Common myeloid progenitor, CD34-positive (primary cell): ENCODE measurements at regions of chr15 and their contacts with region 1.

Region 1: GRCh38 chr15:65032801-65033537 is 3.5 kb upstream of the MTFMT start:
- DNase-seq: peak; percentile 66 to 75 (median 74)
- H3K4me3 ChIP-seq: peak overlapping the region in 1 of 7 experiments; percentile 50
- H3K27ac ChIP-seq: no peak overlapping the region
- H3K4me1 ChIP-seq: peaks cover 5 to 24% (median 17%) of the 10 kb centered on the region in 4 experiments
- H3K27me3 ChIP-seq: peaks cover 0 to 3% (median 0%) of the 10 kb centered on the region in 5 experiments

Region 2: DNA sequence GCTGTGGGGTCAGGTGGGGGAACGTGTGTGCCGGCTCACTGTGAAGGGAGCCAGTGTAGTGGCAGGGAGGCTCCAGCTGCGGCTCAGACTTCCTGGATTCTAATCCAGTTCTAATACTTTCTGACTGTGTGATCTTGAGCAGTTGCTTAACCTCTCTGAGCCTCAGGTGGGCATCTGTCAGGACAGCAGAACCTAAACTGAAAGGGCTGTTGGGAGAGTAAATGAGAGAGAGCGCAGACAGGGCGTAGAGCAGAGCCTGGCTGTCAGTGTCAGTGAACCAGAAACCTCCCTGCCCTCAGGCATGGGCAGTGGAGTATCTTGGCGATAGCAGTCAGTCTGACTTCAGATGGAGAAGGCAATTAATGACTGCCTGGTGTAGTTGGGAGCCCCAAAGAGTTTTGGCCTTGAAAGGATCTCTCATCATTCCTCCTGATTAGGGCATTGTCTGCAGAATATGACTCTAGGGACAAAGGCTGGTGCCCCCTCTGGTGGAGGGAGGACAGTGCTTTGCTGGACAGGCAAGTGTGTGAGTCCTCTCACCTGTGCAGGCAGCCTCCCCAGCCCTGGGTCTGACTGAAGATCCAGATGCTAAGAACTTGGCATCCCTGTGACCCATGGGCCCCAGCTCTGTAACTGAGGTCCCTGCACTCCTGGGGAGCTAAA is 53.2 kb after region 1 on chr15:
- CTCF ChIA-PET with region 1: interaction called, 26 read pairs
- POLR2A ChIA-PET with region 1: no interaction called
- DNase-seq: peak; percentile 25 to 51 (median 46)
- H3K4me3 ChIP-seq: no peak overlapping the region
- H3K27ac ChIP-seq: no peak overlapping the region
- H3K4me1 ChIP-seq: peaks cover 0 to 16% (median 10%) of the 10 kb centered on the region in 4 experiments
- H3K27me3 ChIP-seq: peaks cover 0 to 4% (median 0%) of the 10 kb centered on the region in 5 experiments